Caco-2 (cell line): ENCODE measurements at regions of chr22 and their contacts with region 1.

Region 1: GRCh38 chr22:37428649-37429586 is 1.6 kb upstream of the ELFN2 start:
- DNase-seq: peak; percentile 62 to 74
- H3K4me3 ChIP-seq: no peak overlapping the region
- H3K4me3 Mint-ChIP-seq: peak overlapping the region; percentile 82
- H3K27ac Mint-ChIP-seq: no peak overlapping the region
- H3K4me1 ChIP-seq: peaks cover 33% of the 10 kb centered on the region
- H3K4me1 Mint-ChIP-seq: peaks cover 37% of the 10 kb centered on the region
- H3K27me3 ChIP-seq: no peaks in the 10 kb centered on the region
- H3K27me3 Mint-ChIP-seq: no peaks in the 10 kb centered on the region
- CTCF ChIP-seq: peak; percentile 82 to 84

Region 2: DNA sequence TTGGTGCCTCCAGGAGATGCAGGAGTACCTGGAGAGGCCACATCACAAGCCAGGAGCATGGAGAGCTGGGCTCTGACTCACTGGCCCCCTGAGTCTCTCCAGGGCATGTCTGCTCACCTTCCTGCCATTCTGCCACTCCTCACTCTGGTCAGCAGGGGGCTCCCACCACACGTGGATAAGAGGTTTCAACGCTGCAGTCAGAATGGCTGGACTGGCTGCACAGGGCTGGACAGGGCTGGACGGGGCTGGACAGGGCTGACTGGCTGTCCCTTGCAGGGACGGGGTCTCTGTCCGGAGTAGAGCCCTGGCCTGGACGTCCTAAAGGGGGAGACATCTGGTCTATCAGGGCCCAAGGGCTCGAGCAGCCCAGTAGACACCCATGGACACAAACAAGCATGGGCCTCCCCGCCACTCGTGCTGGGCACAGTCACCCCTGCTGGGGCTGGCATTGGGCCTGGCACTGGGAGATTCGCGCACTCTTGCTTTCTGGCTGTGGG is 112.0 kb before region 1 on chr22:
- CTCF ChIA-PET with region 1: interaction called, 30 read pairs
- POLR2A ChIA-PET with region 1: interaction called, 3 read pairs
- intact Hi-C with region 1: loop called (anchors 1 kb)
- DNase-seq: peak; percentile 87 to 88
- H3K4me3 ChIP-seq: no peak overlapping the region
- H3K4me3 Mint-ChIP-seq: no peak overlapping the region
- H3K27ac Mint-ChIP-seq: no peak overlapping the region
- H3K4me1 ChIP-seq: peaks cover 50% of the 10 kb centered on the region
- H3K4me1 Mint-ChIP-seq: peaks cover 39% of the 10 kb centered on the region
- H3K27me3 ChIP-seq: no peaks in the 10 kb centered on the region
- H3K27me3 Mint-ChIP-seq: no peaks in the 10 kb centered on the region
- CTCF ChIP-seq: peak; percentile 92 to 94

Region 3: GRCh38 chr22:37324340-37325038 is 104.4 kb before region 1 on chr22:
- CTCF ChIA-PET with region 1: interaction called, 17 read pairs
- POLR2A ChIA-PET with region 1: no interaction called
- intact Hi-C with region 1: no loop called
- DNase-seq: no peak
- H3K4me3 ChIP-seq: no peak overlapping the region
- H3K4me3 Mint-ChIP-seq: peak overlapping the region; percentile 63
- H3K27ac Mint-ChIP-seq: peak overlapping the region; percentile 77
- H3K4me1 ChIP-seq: peaks cover 93% of the 10 kb centered on the region
- H3K4me1 Mint-ChIP-seq: peaks cover 69% of the 10 kb centered on the region
- H3K27me3 ChIP-seq: no peaks in the 10 kb centered on the region
- H3K27me3 Mint-ChIP-seq: no peaks in the 10 kb centered on the region
- CTCF ChIP-seq: no peak

Region 4: GRCh38 chr22:37353839-37354238 is 75.1 kb before region 1 on chr22:
- CTCF ChIA-PET with region 1: no interaction called
- POLR2A ChIA-PET with region 1: no interaction called
- intact Hi-C with region 1: loop called (anchors 2 kb)
- DNase-seq: no peak
- H3K4me3 ChIP-seq: no peak overlapping the region
- H3K4me3 Mint-ChIP-seq: no peak overlapping the region
- H3K27ac Mint-ChIP-seq: no peak overlapping the region
- H3K4me1 ChIP-seq: peaks cover 14% of the 10 kb centered on the region
- H3K4me1 Mint-ChIP-seq: no peaks in the 10 kb centered on the region
- H3K27me3 ChIP-seq: no peaks in the 10 kb centered on the region
- H3K27me3 Mint-ChIP-seq: no peaks in the 10 kb centered on the region
- CTCF ChIP-seq: no peak

Region 5: GRCh38 chr22:37370306-37370979 is 58.5 kb before region 1 on chr22:
- CTCF ChIA-PET with region 1: no interaction called
- POLR2A ChIA-PET with region 1: no interaction called
- intact Hi-C with region 1: no loop called
- DNase-seq: no peak
- H3K4me3 ChIP-seq: no peak overlapping the region
- H3K4me3 Mint-ChIP-seq: no peak overlapping the region
- H3K27ac Mint-ChIP-seq: no peak overlapping the region
- H3K4me1 ChIP-seq: no peaks in the 10 kb centered on the region
- H3K4me1 Mint-ChIP-seq: no peaks in the 10 kb centered on the region
- H3K27me3 ChIP-seq: no peaks in the 10 kb centered on the region
- H3K27me3 Mint-ChIP-seq: no peaks in the 10 kb centered on the region
- CTCF ChIP-seq: no peak